ENCODE measurements at regions of chr11 and their contacts with region 1.

Region 1: DNA sequence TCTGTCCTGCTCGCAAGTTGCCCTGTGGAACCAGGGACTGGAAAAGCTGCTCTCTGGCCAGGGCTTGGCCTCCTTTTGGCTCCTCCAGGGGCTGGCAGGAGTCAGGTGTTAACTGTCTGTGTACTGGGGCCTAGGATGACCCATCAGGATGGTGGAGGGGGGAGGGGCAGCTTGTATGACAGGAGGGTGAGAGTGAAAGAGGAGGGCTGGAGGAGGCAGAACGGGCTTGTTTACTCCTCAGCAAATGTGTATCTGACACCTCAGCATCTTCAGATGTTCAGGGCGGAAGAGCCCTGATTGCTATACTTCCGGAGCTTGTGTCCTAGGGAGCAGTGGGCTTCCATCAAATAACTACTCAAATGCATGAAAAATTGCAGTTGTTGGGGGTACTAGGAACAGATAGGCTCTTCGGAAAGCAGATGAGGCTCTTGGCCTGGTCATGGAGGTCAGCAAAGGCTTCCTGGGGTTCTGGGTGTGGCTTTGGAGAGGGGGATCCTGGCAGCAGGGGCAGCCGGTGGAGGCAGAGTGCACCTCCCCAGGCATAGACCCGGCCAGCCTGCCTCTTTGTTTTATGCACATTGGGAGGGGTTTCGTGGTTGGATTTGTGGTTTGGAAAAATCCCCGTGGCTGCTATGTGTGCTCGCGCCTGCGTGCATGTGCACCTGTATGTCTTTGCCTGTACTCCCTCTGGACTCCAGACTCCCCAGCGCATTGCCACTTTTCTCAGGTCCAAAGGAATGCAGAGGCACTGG is 31.2 kb downstream of the CD82 start:
- DNase-seq: peak; percentile 82 to 92 (median 84)
- H3K4me3 ChIP-seq: peak overlapping the region; percentile 29 to 36
- H3K4me3 Mint-ChIP-seq: peak overlapping the region; percentile 81 to 90 (median 85)
- H3K27ac ChIP-seq: peak overlapping the region; percentile 83
- H3K27ac Mint-ChIP-seq: peak overlapping the region; percentile 94 to 99 (median 98)
- H3K4me1 ChIP-seq: peaks cover 96% of the 10 kb centered on the region
- H3K4me1 Mint-ChIP-seq: peaks cover 47 to 95% (median 76%) of the 10 kb centered on the region in 4 donors
- H3K27me3 ChIP-seq: no peaks in the 10 kb centered on the region
- H3K27me3 Mint-ChIP-seq: no peaks in the 10 kb centered on the region

Region 2: GRCh38 chr11:44556735-44557409 is 39.8 kb before region 1 on chr11:
- CTCF ChIA-PET with region 1: interaction called, 14 read pairs
- POLR2A ChIA-PET with region 1: interaction called, 287 read pairs
- intact Hi-C with region 1: no loop called
- DNase-seq: peak; percentile 60 to 69 (median 61)
- H3K4me3 ChIP-seq: no peak overlapping the region
- H3K4me3 Mint-ChIP-seq: no peak overlapping the region
- H3K27ac ChIP-seq: no peak overlapping the region
- H3K27ac Mint-ChIP-seq: peak overlapping the region; percentile 54 to 86 (median 70)
- H3K4me1 ChIP-seq: peaks cover 21% of the 10 kb centered on the region
- H3K4me1 Mint-ChIP-seq: peaks cover 16 to 34% (median 27%) of the 10 kb centered on the region in 4 donors
- H3K27me3 ChIP-seq: no peaks in the 10 kb centered on the region
- H3K27me3 Mint-ChIP-seq: no peaks in the 10 kb centered on the region

Region 3: DNA sequence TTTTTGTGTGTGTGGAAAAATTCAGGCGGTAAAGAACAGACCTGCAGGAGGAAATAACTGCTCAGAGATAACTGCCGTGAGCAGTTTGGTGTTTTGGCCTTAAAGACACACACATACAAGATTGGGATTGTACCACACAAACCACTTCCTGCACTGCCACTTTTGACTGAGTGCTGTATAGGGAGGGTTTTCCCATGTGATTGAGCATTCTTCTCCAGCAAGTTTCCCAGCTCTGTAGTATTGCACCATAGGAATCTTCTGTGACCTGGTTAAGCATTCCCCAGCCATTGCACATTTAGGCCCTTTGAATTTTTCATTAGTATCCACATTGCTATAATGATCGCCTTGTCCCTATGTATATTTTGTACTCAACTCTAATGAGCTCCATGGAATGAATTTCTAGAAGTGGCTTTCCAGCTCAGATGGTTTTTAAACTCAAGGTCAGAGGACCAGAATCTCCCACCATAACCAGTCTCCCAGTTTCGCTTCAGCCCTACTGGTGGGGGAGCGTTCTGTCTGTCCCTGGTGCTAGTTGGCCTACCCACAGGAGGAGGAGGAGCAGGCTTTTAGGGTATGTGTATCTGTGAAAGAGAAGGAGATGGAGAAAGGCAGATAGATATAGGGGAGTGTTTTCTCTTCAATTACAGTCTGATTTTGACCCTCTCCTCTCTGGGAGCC is 22.0 kb before region 1 on chr11:
- CTCF ChIA-PET with region 1: interaction called, 26 read pairs
- POLR2A ChIA-PET with region 1: interaction called, 287 read pairs
- intact Hi-C with region 1: loop called (anchors 1 kb)
- DNase-seq: peak; percentile 32 to 79 (median 43)
- H3K4me3 ChIP-seq: peak overlapping the region in 1 of 2 donors; percentile 21
- H3K4me3 Mint-ChIP-seq: peak overlapping the region; percentile 71 to 87 (median 81)
- H3K27ac ChIP-seq: peak overlapping the region; percentile 52
- H3K27ac Mint-ChIP-seq: peak overlapping the region; percentile 87 to 96 (median 90)
- H3K4me1 ChIP-seq: peaks cover 100% of the 10 kb centered on the region
- H3K4me1 Mint-ChIP-seq: peaks cover 74 to 99% (median 89%) of the 10 kb centered on the region in 4 donors
- H3K27me3 ChIP-seq: no peaks in the 10 kb centered on the region
- H3K27me3 Mint-ChIP-seq: no peaks in the 10 kb centered on the region

Region 4: DNA sequence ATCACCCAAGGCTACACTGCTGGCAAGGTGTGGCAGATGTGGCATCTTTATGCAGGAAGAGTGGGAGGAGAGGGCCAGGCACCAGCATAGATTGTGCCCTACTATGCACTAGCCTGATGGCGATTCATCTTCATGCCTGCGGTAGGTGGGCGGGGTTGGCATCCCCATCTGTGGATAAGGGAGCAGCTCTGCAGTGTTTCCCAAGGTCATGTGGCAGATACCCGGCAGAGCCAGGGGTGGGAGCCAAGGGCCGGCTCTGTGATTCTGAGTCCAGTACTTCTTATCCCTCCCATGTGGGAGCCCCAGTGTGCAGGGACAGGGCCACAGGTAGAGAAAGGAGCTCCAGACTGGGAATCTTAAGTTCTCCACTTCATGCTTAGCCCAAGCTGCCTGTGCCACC is 11.3 kb before region 1 on chr11:
- CTCF ChIA-PET with region 1: interaction called, 3 read pairs
- POLR2A ChIA-PET with region 1: interaction called, 30 read pairs
- intact Hi-C with region 1: no loop called
- DNase-seq: no peak
- H3K4me3 ChIP-seq: no peak overlapping the region
- H3K4me3 Mint-ChIP-seq: no peak overlapping the region
- H3K27ac ChIP-seq: no peak overlapping the region
- H3K27ac Mint-ChIP-seq: peak overlapping the region in 5 of 7 donors; percentile 64 to 78 (median 68)
- H3K4me1 ChIP-seq: peaks cover 59% of the 10 kb centered on the region
- H3K4me1 Mint-ChIP-seq: peaks cover 30 to 89% (median 47%) of the 10 kb centered on the region in 4 donors
- H3K27me3 ChIP-seq: no peaks in the 10 kb centered on the region
- H3K27me3 Mint-ChIP-seq: no peaks in the 10 kb centered on the region

Region 5: DNA sequence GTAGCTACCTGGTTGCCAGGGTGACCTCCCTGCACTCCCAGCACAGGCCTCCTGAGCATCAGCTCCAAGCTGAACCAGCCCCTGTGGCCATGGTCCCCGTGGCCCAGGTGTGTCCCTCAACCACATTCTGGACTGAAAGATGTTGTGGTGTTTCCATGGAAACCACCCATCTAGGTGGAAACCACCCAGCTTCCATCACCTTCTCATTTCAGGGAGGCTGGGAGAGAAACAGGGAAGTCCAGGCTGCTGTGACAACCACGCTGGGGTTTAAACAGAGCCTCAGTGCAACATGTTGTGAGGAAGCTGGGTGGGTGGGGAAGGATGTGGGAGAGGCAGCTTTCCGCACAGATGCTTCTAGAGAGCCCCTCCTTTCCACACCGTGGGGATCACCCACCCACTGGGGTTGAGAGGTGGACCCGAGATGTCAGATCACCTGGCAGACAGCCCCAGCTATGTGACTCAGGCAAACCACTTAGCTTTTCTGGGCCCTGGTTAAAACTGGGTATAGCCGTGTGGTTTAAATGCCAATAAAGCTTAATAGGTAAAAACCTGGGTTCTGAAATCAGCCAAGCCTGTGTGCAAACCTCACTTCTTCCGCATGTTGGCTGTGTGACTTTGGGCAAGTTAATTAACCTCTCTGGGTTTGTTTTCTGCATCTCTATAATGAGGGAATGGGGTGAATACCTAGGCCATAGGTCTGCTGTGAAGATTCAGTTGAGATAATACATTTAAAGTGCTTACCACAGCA is 15.2 kb after region 1 on chr11:
- CTCF ChIA-PET with region 1: interaction called, 28 read pairs
- POLR2A ChIA-PET with region 1: interaction called, 210 read pairs
- intact Hi-C with region 1: loop called (anchors 1 kb)
- DNase-seq: peak; percentile 75 to 94 (median 77)
- H3K4me3 ChIP-seq: no peak overlapping the region
- H3K4me3 Mint-ChIP-seq: peak overlapping the region in 7 of 8 donors; percentile 22 to 70 (median 52)
- H3K27ac ChIP-seq: peak overlapping the region; percentile 53
- H3K27ac Mint-ChIP-seq: peak overlapping the region; percentile 83 to 96 (median 92)
- H3K4me1 ChIP-seq: peaks cover 100% of the 10 kb centered on the region
- H3K4me1 Mint-ChIP-seq: peaks cover 54 to 100% (median 80%) of the 10 kb centered on the region in 4 donors
- H3K27me3 ChIP-seq: no peaks in the 10 kb centered on the region
- H3K27me3 Mint-ChIP-seq: no peaks in the 10 kb centered on the region

Region 6: DNA sequence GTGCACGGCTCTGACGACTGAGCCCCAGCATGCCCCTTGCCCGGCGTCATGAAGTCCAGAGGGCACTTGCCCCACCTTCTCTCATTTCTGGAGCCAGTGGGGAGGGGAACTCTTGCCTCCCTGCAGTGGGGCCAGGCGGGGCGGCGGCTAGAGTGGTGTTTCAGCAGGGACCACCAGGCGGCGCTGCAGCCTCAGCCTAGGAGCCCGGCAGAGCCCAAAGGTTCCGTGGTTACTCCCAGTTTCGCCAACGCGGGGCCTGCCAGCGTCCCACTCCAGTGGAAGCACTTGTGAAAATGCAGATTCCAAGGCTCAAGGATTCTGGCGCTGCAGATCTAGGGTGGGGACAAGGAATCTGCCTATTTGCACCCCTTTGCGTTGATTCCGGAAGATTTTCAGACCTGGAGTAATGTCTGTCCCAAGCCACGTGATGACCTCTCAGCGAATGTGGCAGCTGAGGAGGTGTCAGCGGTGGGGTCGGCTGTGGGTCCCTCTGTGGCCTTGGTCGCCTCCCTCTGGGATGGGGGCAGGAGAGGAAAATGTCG is 24.5 kb after region 1 on chr11:
- CTCF ChIA-PET with region 1: interaction called, 11 read pairs
- POLR2A ChIA-PET with region 1: interaction called, 210 read pairs
- intact Hi-C with region 1: no loop called
- DNase-seq: peak; percentile 55 to 64 (median 57)
- H3K4me3 ChIP-seq: no peak overlapping the region
- H3K4me3 Mint-ChIP-seq: peak overlapping the region in 1 of 8 donors; percentile 25
- H3K27ac ChIP-seq: no peak overlapping the region
- H3K27ac Mint-ChIP-seq: peak overlapping the region in 5 of 7 donors; percentile 25 to 52 (median 41)
- H3K4me1 ChIP-seq: peaks cover 28% of the 10 kb centered on the region
- H3K4me1 Mint-ChIP-seq: peaks cover 18 to 62% (median 42%) of the 10 kb centered on the region in 4 donors
- H3K27me3 ChIP-seq: no peaks in the 10 kb centered on the region
- H3K27me3 Mint-ChIP-seq: no peaks in the 10 kb centered on the region